Tibial artery (tissue), 4 donors: ENCODE measurements at regions of chr12 and their contacts with region 1.

Region 1: DNA sequence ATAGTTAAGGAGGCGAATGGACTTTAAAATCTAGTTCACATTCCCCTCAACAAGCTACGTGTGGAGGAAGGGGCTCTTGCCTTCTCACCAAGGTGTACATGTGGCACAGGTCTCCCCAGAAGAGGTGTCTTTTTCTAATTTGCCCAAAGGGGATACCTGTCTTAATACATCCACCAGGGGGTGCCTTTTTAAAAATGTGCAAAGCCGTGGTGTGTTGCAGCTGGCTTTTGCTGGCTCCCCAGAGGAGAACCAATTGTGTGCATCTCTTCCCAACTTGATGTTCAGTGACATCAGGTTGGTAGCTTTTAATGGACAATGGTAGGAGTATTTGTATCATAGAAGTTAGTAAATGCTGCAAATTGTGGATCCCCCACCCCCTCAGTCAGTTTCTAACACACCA is 33.8 kb downstream of the CREBL2 start:
- DNase-seq: no peak
- H3K4me3 ChIP-seq: no peak overlapping the region
- H3K27ac ChIP-seq: no peak overlapping the region
- H3K4me1 ChIP-seq: peaks cover 0 to 6% (median 0%) of the 10 kb centered on the region in 4 donors
- H3K27me3 ChIP-seq: no peaks in the 10 kb centered on the region
- CTCF ChIP-seq: peak; percentile 27 to 36

Region 2: DNA sequence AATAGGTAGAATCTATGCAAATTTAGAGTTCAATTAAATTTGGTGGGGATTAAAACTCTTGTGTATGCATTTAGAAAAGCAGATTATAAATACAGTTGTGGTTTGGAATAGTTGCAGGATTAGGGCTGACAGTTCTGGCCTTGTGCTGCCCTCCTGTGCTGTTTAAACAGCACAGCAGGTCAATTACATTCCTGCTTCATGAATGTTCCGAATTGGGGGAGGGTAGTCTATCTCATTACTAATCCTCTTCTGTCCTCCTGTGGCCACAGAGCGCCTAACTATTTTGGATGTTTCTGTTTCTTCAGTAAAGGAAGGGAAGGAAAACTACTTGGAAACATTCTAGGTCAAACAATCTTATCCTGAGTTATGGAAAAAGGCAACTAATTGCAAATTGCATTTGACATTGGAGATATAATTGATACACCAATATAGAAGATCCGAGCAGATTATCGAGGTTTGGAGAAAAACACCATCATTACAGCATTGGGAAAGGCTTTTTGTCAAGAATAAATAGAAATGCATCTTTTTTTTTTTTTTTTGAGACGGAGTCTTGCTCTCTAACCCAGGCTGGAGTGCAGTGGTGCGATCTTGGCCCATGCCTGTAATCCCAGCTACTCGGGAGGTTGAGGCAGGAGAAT is 59.2 kb after region 1 on chr12:
- intact Hi-C with region 1: loop called (anchors 5 kb)
- DNase-seq: peak in 1 of 2 donors; percentile 64
- H3K4me3 ChIP-seq: no peak overlapping the region
- H3K27ac ChIP-seq: peak overlapping the region in 1 of 2 donors; percentile 11
- H3K4me1 ChIP-seq: peaks cover 0 to 8% (median 2%) of the 10 kb centered on the region in 4 donors
- H3K27me3 ChIP-seq: no peaks in the 10 kb centered on the region
- CTCF ChIP-seq: peak; percentile 96 to 99

Region 3: DNA sequence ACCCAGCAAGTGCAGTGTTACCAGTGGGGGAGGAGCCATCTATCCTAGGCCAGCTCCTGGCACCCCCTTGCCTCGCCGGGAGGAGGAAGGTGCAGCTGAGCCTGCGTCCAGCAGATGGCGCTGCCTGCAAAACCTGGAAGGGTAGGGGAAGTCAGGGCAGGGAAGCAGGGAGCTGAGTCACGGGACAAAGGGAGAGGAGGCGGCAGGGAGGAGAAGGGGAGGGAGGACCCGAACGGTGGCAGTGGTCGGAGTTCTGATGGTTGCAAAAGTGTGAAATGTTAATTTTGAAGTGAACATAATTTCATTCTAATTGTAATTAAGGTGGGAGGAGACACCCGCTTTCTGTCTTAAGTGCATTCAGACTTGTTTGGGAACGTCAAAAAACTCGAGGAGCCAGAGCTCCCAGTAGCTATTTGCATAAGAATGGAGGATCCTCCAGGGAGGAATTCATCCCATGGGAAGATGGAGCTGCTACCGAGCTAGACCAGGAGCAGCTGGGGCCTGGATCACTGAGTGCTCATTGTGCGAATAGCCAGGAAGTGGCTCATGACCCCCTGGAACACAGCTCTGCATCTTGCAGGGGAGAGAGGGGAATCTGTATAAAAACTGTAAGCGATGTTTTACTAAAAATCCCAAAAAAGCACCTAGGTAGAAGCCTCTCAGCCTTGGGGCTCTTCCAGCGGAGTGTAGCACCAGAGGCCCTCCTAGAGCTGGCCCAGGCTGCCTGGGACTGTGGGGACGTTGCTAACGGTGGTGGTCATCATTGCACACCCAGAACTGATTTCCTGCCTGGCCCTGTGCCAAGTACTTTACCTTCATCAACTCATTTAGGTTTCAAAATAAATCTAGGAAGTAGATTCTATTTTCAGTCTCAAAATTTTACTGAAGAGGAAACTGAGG is 610.6 kb after region 1 on chr12:
- intact Hi-C with region 1: no loop called
- DNase-seq: peak; percentile 94 to 97
- H3K4me3 ChIP-seq: peak overlapping the region; percentile 25 to 44
- H3K27ac ChIP-seq: no peak overlapping the region
- H3K4me1 ChIP-seq: peaks cover 0 to 5% (median 5%) of the 10 kb centered on the region in 4 donors
- H3K27me3 ChIP-seq: no peaks in the 10 kb centered on the region
- CTCF ChIP-seq: peak; percentile 94